Ovary (tissue), 10 donors: ENCODE measurements at regions of chr11 and their contacts with region 1.

Region 1: GRCh38 chr11:65512306-65512705 is 12.6 kb upstream of the SCYL1 start:
- DNase-seq: peak in 1 of 5 donors; percentile 22
- H3K4me3 ChIP-seq: no peak overlapping the region
- H3K27ac ChIP-seq: no peak overlapping the region
- H3K4me1 ChIP-seq: no peaks in the 10 kb centered on the region
- H3K27me3 ChIP-seq: no peaks in the 10 kb centered on the region
- CTCF ChIP-seq: no peak
- EP300 ChIP-seq: no peak
- POLR2A ChIP-seq: no peak

Region 2: GRCh38 chr11:65352783-65353182 is 159.5 kb before region 1 on chr11:
- intact Hi-C with region 1: no loop called
- DNase-seq: no peak
- H3K4me3 ChIP-seq: no peak overlapping the region
- H3K27ac ChIP-seq: no peak overlapping the region
- H3K4me1 ChIP-seq: peaks cover 15% of the 10 kb centered on the region
- H3K27me3 ChIP-seq: no peaks in the 10 kb centered on the region
- CTCF ChIP-seq: no peak
- EP300 ChIP-seq: no peak
- POLR2A ChIP-seq: no peak

Region 3: DNA sequence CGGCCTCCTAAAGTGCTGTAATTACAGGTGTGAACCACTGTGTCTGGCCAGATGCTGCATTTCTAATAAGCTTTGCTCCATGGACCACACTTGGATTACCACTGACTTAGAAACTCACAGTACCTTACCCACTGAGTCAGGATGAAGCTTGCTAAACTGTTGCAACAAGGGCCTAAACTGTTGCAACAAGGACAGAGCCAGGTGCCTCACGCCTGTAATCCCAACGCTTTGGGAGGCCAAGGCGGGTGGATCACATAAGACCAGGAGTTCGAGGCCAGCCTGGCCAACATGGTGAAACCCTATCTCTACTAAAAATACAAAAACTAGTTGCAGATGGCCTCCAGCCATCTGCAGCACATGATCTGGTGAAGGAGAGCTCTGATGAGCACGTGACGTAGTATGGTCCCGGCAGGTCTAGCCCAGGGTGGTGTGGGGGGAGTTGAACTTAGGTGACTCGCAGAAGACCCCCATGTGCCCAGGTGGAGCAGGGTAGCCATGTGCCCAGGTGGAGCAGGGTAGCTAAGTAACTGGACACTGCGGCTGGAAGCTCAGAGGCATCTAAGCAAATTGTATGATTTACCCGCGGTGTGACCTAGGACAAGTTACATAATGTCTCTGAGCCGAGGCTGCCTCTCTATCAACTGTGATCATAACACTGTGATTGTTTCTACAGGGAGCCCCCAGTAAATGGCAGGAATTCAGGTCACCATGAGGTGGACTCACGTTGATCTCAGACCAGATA is 138.3 kb before region 1 on chr11:
- intact Hi-C with region 1: loop called in 1 of 4 experiments (anchors 5 kb)
- DNase-seq: no peak
- H3K4me3 ChIP-seq: no peak overlapping the region
- H3K27ac ChIP-seq: no peak overlapping the region
- H3K4me1 ChIP-seq: no peaks in the 10 kb centered on the region
- H3K27me3 ChIP-seq: no peaks in the 10 kb centered on the region
- CTCF ChIP-seq: no peak
- EP300 ChIP-seq: no peak
- POLR2A ChIP-seq: no peak

Region 4: DNA sequence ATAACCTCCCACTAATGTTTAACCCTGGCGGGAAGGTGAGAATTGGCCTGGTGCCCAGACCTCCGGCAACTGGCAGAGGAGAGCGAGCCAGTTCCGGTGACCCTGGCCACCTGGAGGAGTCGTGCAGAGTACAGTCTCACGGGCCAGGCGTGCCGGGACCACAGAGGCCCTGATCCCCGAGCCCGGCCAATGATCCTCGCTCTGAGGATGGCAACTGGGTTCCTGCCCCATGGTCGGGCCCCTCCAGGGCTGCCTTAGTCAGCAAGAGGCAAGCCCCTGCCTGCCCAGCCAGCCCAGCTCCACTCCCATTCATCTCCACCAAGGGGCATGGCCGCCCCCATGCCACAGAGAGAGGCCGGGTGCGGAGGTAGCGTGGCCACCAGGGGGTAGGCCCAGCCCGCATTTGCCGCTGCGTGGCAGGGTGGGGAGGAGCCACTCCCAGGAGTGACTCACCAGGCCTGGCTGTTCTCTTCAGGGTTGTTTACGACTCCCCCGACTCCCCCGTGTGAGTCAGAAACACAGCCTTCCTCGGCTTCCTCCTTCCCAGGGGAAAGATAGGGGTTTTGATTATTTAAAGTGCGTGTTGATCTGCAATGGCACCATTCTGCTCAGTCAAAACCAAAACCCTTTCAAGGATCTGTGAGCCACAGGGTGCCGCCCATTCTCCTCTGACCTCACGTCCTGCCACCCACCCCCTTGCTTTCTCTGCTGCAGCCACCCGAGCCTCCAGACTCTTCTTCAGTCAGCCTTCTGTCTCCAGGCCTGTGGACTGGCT is 130.1 kb before region 1 on chr11 and contains the start of gene SLC25A45:
- intact Hi-C with region 1: loop called in 2 of 4 experiments (anchors 5 kb)
- DNase-seq: peak; percentile 92 to 96 (median 94)
- H3K4me3 ChIP-seq: peak within 1 kb of the TSS; percentile 42
- H3K27ac ChIP-seq: peak within 1 kb of the TSS; percentile 93 to 96
- H3K4me1 ChIP-seq: peaks cover 16% of the 10 kb centered on the region
- H3K27me3 ChIP-seq: no peaks in the 10 kb centered on the region
- CTCF ChIP-seq: peak; percentile 71 to 100 (median 99)
- EP300 ChIP-seq: peak; percentile 52
- POLR2A ChIP-seq: peak; percentile 53
- total RNA-seq, gene SLC25A45: 3.2 to 8.7 (median 4.6) TPM

Region 5: GRCh38 chr11:65685981-65686380 is 173.7 kb after region 1 on chr11:
- intact Hi-C with region 1: no loop called
- DNase-seq: peak; percentile 44 to 73 (median 52)
- H3K4me3 ChIP-seq: no peak overlapping the region
- H3K27ac ChIP-seq: no peak overlapping the region
- H3K4me1 ChIP-seq: peaks cover 1% of the 10 kb centered on the region
- H3K27me3 ChIP-seq: no peaks in the 10 kb centered on the region
- CTCF ChIP-seq: no peak
- EP300 ChIP-seq: no peak
- POLR2A ChIP-seq: no peak